GM23248 (cell line): ENCODE measurements at regions of chr3 and their contacts with region 1.

Region 1: GRCh38 chr3:63349583-63350521 is 71.7 kb downstream of the SYNPR start:
- DNase-seq: peak; percentile 88
- H3K4me3 ChIP-seq: no peak overlapping the region
- H3K27ac ChIP-seq: no peak overlapping the region
- H3K4me1 ChIP-seq: peaks cover 17% of the 10 kb centered on the region
- H3K27me3 ChIP-seq: no peaks in the 10 kb centered on the region

Region 2: DNA sequence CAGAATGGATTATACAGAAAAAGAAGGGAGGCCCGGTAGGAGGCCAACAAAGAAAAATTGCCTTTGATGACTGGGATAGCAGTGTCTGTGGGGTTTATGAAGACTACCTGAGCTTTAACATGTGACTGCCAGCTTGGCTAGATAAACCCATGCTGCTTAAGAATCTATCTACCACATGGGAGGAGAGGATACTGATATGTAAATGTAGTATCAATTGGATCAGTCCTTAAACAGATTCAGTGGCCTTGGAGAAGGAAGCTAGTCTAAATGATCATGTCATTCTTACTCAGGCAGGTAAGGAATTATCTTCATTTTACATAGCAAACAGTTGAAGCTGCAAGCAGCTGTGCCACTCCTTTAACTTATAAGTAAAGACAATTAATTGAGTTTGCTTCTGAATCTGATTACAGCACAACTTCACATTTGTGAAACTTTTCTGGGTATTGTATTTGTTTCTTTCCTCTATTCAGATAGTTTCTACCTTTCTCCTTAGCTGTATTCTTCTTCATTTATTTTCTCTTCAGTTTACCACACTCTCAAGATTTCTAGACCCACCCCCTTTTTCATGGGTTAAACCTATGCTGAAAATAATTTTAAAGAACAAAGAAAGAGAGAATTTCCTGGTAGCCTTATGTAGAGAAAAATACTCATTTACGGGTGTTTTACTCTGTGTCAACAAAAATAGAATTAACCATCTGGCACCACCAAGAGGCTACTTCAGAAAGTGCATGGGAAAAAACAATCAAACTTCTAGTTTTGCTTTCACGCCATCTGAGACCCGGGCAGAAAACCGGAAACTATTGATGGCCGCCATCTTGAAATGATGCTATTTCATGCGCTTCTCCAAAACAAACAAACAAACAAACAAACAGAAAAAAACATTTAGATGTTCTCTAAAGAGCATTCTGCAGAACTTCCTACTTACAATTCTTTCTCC is 121.5 kb before region 1 on chr3:
- in situ Hi-C with region 1: no loop called
- DNase-seq: peak; percentile 81
- H3K4me3 ChIP-seq: peak overlapping the region; percentile 49; the same call in 1 of the 2 replicates
- H3K27ac ChIP-seq: no peak overlapping the region
- H3K4me1 ChIP-seq: no peaks in the 10 kb centered on the region
- H3K27me3 ChIP-seq: no peaks in the 10 kb centered on the region

Region 3: GRCh38 chr3:63661248-63661647 is 311.4 kb after region 1 on chr3:
- in situ Hi-C with region 1: loop called (anchors 25 kb)
- DNase-seq: peak; percentile 33
- H3K4me3 ChIP-seq: no peak overlapping the region
- H3K27ac ChIP-seq: no peak overlapping the region
- H3K4me1 ChIP-seq: peaks cover 16% of the 10 kb centered on the region
- H3K27me3 ChIP-seq: no peaks in the 10 kb centered on the region

Region 4: GRCh38 chr3:63818281-63819150 is 468.7 kb after region 1 on chr3:
- in situ Hi-C with region 1: loop called (anchors 5 kb)
- DNase-seq: peak; percentile 78
- H3K4me3 ChIP-seq: no peak overlapping the region
- H3K27ac ChIP-seq: no peak overlapping the region
- H3K4me1 ChIP-seq: 0 out of 2 replicates have a peak, but pooled peaks cover 2% of the 10 kb centered on the region
- H3K27me3 ChIP-seq: no peaks in the 10 kb centered on the region

Region 5: GRCh38 chr3:63993653-63994079 is 643.8 kb after region 1 on chr3:
- in situ Hi-C with region 1: loop called (anchors 25 kb)
- DNase-seq: peak; percentile 92
- H3K4me3 ChIP-seq: no peak overlapping the region
- H3K27ac ChIP-seq: no peak overlapping the region
- H3K4me1 ChIP-seq: no peaks in the 10 kb centered on the region
- H3K27me3 ChIP-seq: no peaks in the 10 kb centered on the region